ENCODE measurements at regions of chr14 and their contacts with region 1.

Region 1: DNA sequence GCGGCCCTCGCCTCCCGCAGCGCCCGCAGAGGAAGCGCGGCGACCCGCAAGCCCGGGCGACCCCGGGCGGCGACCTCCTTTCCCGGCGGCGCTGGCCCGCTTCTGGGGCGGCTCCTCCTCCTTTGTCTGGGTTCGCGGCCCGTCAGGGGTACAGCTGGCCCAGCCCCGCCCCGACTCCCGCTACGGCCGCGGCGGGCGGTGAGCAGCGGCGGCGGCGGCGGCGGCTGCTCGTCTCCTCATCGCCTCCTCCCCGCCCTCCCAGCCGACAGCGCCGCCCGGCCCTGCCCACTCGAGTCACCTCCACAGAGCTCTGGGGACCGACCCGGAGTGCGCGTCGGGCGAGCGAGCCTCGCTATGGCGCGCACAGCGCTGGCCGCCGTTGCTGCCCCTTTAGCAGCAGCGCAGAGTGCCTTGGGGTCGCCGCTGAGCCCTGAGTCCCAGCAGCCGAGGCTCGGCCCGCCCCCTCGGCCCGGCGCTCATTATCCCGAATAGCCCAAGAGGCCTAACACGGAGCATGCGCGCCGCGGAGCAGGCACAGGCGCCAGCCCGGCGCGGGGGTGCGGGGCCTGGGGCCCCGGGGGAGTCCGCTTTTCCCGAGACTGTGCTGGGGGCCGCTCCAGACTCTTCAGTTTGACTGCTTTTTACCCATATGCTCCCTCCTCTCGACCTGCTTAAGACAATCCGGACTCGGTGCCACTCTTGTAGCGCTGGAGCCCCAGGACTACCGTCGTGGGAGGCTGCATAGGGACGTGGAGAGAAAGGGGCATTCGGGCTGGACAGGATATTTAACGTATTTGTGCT is at the start of gene SOS2:
- DNase-seq: peak; percentile 63 to 91 (median 83)
- ATAC-seq: peak; percentile 78
- H3K4me3 ChIP-seq: peak within 1 kb of the TSS; percentile 77 to 86
- H3K4me3 Mint-ChIP-seq: peak within 1 kb of the TSS; percentile 86
- H3K27ac ChIP-seq: peak within 1 kb of the TSS; percentile 81 to 84
- H3K27ac Mint-ChIP-seq: peak within 1 kb of the TSS; percentile 94
- H3K4me1 ChIP-seq: peaks cover 16% of the 10 kb centered on the region
- H3K4me1 Mint-ChIP-seq: peaks cover 36% of the 10 kb centered on the region
- H3K27me3 ChIP-seq: no peaks in the 10 kb centered on the region
- H3K27me3 Mint-ChIP-seq: no peaks in the 10 kb centered on the region
- CTCF ChIP-seq: no peak
- total RNA-seq, gene SOS2: 46.8 to 50.2 TPM

Region 2: DNA sequence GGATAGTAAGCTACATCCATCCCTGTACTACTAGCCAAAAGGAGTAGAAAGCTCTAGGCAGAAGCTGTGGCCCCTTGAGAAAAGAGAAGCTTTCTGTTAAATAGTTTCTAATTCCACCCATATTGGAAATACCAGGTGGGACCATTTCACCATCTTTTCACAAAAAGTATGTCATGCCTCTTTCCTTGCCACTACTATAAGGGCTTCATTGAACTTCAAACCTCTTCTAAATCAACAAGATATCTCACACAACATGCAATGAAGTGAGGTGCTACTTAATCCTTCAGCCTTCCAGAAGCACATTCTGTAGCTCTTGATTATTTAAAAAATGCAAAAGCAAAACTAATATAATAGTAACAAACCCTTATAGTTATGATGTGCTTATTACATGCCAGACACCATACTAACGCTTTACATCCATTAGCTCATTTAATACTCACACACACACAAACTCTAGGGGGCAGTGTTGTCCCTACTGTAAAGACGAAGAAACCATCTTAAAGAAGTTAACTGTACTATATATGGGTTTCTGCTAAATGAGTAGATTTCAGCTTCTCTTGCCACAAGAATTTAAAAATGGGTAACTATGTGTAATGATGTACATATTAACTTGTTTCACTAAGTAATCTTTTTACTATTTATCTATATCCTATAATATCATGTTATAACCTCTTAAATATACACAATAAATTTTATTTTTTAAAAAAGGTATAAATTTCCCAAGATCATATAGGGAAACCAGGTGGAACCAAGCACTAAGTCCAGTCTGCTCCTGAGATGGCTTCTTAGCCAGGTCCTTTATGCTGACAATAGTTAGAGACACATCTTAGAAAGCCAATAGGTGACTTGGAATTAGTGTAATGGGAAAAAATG is 769.9 kb before region 1 on chr14:
- CTCF ChIA-PET with region 1: no interaction called
- POLR2A ChIA-PET with region 1: no interaction called
- intact Hi-C with region 1: no loop called
- DNase-seq: peak in 8 of 9 experiments; percentile 39 to 85 (median 54)
- ATAC-seq: peak; percentile 87
- H3K4me3 ChIP-seq: no peak overlapping the region
- H3K4me3 Mint-ChIP-seq: no peak overlapping the region
- H3K27ac ChIP-seq: no peak overlapping the region
- H3K27ac Mint-ChIP-seq: no peak overlapping the region
- H3K4me1 ChIP-seq: no peaks in the 10 kb centered on the region
- H3K4me1 Mint-ChIP-seq: no peaks in the 10 kb centered on the region
- H3K27me3 ChIP-seq: no peaks in the 10 kb centered on the region
- H3K27me3 Mint-ChIP-seq: peaks cover 3% of the 10 kb centered on the region
- CTCF ChIP-seq: peak; percentile 78

Region 3: GRCh38 chr14:49585803-49586672 is 645.6 kb before region 1 on chr14 and contains the start of gene RPS29:
- CTCF ChIA-PET with region 1: no interaction called
- POLR2A ChIA-PET with region 1: no interaction called
- intact Hi-C with region 1: loop called (anchors 5 kb)
- DNase-seq: peak; percentile 97 to 100 (median 98)
- ATAC-seq: peak; percentile 82
- H3K4me3 ChIP-seq: peak within 1 kb of the TSS; percentile 81 to 98
- H3K4me3 Mint-ChIP-seq: peak within 1 kb of the TSS; percentile 91
- H3K27ac ChIP-seq: peak within 1 kb of the TSS; percentile 97 to 98
- H3K27ac Mint-ChIP-seq: peak within 1 kb of the TSS; percentile 98
- H3K4me1 ChIP-seq: peaks cover 33% of the 10 kb centered on the region
- H3K4me1 Mint-ChIP-seq: peaks cover 48% of the 10 kb centered on the region
- H3K27me3 ChIP-seq: no peaks in the 10 kb centered on the region
- H3K27me3 Mint-ChIP-seq: no peaks in the 10 kb centered on the region
- CTCF ChIP-seq: no peak
- total RNA-seq, gene RPS29: 3,843 to 3,876 TPM

Region 4: DNA sequence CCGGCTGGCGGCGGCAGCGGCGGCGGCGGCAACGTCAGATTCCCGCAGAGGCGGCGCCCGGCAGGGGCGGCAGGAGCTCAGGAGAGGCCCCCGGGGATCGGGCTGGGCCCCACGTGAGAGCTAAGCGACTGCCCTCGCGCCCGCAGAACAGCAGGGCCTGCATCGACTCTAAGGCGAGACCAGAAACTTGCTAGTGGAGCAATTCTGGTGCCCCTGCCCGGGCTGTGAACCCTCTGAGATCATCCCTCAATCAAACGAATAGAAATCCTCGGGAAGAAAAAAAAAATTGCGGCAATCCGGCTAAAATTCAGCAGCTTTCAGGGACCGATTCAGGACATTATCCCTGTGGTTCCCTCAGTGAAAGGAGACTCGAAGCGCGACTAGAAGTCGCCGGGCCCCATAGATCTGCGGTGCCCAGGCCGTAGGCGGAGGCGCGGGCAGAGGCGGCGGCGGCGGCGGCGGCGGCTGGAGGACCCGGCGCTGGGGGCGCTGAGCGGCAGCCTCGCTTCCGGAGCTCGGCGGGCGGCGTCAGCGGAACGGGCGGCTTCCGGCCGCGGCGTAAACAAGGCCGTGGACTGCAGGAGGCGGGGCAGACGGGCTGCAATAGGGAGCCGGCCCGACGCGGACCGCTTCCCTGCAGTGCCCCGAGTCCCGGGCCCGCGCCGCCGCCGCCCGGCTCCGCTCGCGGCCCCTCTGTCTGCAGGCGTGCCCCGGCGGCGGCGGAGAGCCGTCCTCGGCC is 463.9 kb before region 1 on chr14 and contains the start of gene KLHDC2:
- CTCF ChIA-PET with region 1: no interaction called
- POLR2A ChIA-PET with region 1: no interaction called
- intact Hi-C with region 1: loop called (anchors 1 to 5 kb)
- DNase-seq: peak; percentile 74 to 94 (median 87)
- ATAC-seq: peak; percentile 65
- H3K4me3 ChIP-seq: peak within 1 kb of the TSS; percentile 79 to 99
- H3K4me3 Mint-ChIP-seq: peak within 1 kb of the TSS; percentile 98
- H3K27ac ChIP-seq: peak within 1 kb of the TSS; percentile 94 to 97
- H3K27ac Mint-ChIP-seq: peak within 1 kb of the TSS; percentile 100
- H3K4me1 ChIP-seq: peaks cover 29% of the 10 kb centered on the region
- H3K4me1 Mint-ChIP-seq: peaks cover 38% of the 10 kb centered on the region
- H3K27me3 ChIP-seq: no peaks in the 10 kb centered on the region
- H3K27me3 Mint-ChIP-seq: no peaks in the 10 kb centered on the region
- CTCF ChIP-seq: peak; percentile 22
- total RNA-seq, gene KLHDC2: 121 to 122 TPM

Region 5: DNA sequence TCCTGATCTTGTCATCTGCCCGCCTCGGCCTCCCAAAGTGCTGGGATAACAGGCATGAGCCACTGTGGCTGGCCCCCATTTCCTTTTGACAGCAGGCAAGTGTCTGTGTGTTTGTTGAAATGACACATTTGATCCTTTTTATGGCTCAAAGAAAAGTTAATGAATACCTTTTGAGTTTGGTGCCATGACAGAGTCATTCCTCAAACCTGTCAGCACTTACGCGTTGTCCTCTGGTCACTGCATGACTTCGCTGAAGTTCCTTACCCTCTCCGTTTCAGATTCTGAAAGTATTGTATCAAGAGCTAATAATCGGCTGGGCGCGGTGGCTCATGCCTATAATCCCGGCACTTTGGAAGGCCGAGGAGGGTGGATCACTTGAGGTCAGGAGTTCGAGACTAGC is 411.5 kb before region 1 on chr14:
- CTCF ChIA-PET with region 1: no interaction called
- POLR2A ChIA-PET with region 1: no interaction called
- intact Hi-C with region 1: no loop called
- DNase-seq: no peak
- ATAC-seq: no peak
- H3K4me3 ChIP-seq: no peak overlapping the region
- H3K4me3 Mint-ChIP-seq: no peak overlapping the region
- H3K27ac ChIP-seq: no peak overlapping the region
- H3K27ac Mint-ChIP-seq: no peak overlapping the region
- H3K4me1 ChIP-seq: no peaks in the 10 kb centered on the region
- H3K4me1 Mint-ChIP-seq: no peaks in the 10 kb centered on the region
- H3K27me3 ChIP-seq: no peaks in the 10 kb centered on the region
- H3K27me3 Mint-ChIP-seq: no peaks in the 10 kb centered on the region
- CTCF ChIP-seq: no peak

Region 6: DNA sequence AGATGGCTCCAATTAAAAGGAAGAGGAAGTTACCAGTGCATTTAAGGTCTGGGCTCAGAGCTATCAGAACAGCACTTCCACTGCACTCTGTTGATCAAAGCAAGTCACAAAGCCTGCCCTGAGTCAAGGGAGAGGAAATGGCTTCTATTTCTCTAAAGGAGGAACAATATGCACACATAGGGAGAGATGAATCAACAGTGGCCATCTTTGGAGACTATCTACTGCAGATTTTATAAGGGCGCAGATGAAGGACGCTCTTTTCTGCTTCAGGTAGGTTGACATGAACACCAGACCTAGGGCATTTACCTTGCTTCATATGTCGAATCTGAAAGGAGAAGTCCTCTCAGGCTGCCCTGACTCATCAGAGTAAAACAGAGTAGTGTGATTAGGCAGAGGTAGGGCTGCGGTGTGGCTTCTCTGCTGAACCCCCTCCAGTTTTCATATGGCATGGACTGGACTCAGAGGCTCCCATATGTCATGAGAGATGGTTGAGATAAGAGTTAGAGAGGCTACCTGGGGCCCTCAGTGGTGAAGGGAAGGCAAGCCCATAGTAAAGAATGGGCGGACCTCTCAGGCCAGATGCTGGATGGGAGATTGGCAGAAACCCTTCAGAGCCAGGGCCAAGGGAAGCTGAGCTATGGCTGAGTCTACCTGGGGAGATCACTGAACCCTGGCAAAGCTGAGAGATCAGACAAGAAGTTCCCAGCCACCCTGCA is 254.4 kb before region 1 on chr14:
- CTCF ChIA-PET with region 1: no interaction called
- POLR2A ChIA-PET with region 1: no interaction called
- intact Hi-C with region 1: no loop called
- DNase-seq: peak in 6 of 9 experiments; percentile 24 to 65 (median 36)
- ATAC-seq: peak; percentile 79
- H3K4me3 ChIP-seq: peak overlapping the region in 1 of 2 experiments; percentile 24
- H3K4me3 Mint-ChIP-seq: peak overlapping the region; percentile 60
- H3K27ac ChIP-seq: peak overlapping the region; percentile 34 to 61
- H3K27ac Mint-ChIP-seq: peak overlapping the region; percentile 94
- H3K4me1 ChIP-seq: peaks cover 65% of the 10 kb centered on the region
- H3K4me1 Mint-ChIP-seq: peaks cover 84% of the 10 kb centered on the region
- H3K27me3 ChIP-seq: no peaks in the 10 kb centered on the region
- H3K27me3 Mint-ChIP-seq: no peaks in the 10 kb centered on the region
- CTCF ChIP-seq: no peak

Region 7: GRCh38 chr14:50186107-50186506 is 45.6 kb before region 1 on chr14:
- CTCF ChIA-PET with region 1: no interaction called
- POLR2A ChIA-PET with region 1: interaction called, 3 read pairs
- intact Hi-C with region 1: loop called in 1 of 2 experiments (anchors 5 kb)
- DNase-seq: no peak
- ATAC-seq: no peak
- H3K4me3 ChIP-seq: no peak overlapping the region
- H3K4me3 Mint-ChIP-seq: no peak overlapping the region
- H3K27ac ChIP-seq: no peak overlapping the region
- H3K27ac Mint-ChIP-seq: no peak overlapping the region
- H3K4me1 ChIP-seq: no peaks in the 10 kb centered on the region
- H3K4me1 Mint-ChIP-seq: no peaks in the 10 kb centered on the region
- H3K27me3 ChIP-seq: no peaks in the 10 kb centered on the region
- H3K27me3 Mint-ChIP-seq: no peaks in the 10 kb centered on the region
- CTCF ChIP-seq: no peak

Region 8: GRCh38 chr14:50532502-50533240 is 301.0 kb after region 1 on chr14 and contains the start of gene MAP4K5:
- CTCF ChIA-PET with region 1: no interaction called
- POLR2A ChIA-PET with region 1: no interaction called
- intact Hi-C with region 1: loop called (anchors 2 to 5 kb)
- DNase-seq: peak; percentile 73 to 95 (median 88)
- ATAC-seq: peak; percentile 93
- H3K4me3 ChIP-seq: peak within 1 kb of the TSS; percentile 45 to 88
- H3K4me3 Mint-ChIP-seq: peak within 1 kb of the TSS; percentile 89
- H3K27ac ChIP-seq: peak within 1 kb of the TSS; percentile 47 to 70
- H3K27ac Mint-ChIP-seq: peak within 1 kb of the TSS; percentile 92
- H3K4me1 ChIP-seq: peaks cover 42% of the 10 kb centered on the region
- H3K4me1 Mint-ChIP-seq: peaks cover 49% of the 10 kb centered on the region
- H3K27me3 ChIP-seq: no peaks in the 10 kb centered on the region
- H3K27me3 Mint-ChIP-seq: no peaks in the 10 kb centered on the region
- CTCF ChIP-seq: peak; percentile 69
- total RNA-seq, gene MAP4K5: 32.0 to 32.7 TPM

Measured in CD8-positive, alpha-beta T cell (primary cell).